Panc1 (cell line): ENCODE measurements at regions of chr5 and their contacts with region 1.

Region 1: GRCh38 chr5:172059661-172060100 is 53.2 kb upstream of the FBXW11 start:
- DNase-seq: no peak
- ATAC-seq: peak; percentile 78
- H3K4me3 ChIP-seq: no peak overlapping the region
- H3K27ac ChIP-seq: no peak overlapping the region
- H3K4me1 ChIP-seq: no peaks in the 10 kb centered on the region
- H3K27me3 ChIP-seq: no peaks in the 10 kb centered on the region
- CTCF ChIP-seq: peak; percentile 89

Region 2: DNA sequence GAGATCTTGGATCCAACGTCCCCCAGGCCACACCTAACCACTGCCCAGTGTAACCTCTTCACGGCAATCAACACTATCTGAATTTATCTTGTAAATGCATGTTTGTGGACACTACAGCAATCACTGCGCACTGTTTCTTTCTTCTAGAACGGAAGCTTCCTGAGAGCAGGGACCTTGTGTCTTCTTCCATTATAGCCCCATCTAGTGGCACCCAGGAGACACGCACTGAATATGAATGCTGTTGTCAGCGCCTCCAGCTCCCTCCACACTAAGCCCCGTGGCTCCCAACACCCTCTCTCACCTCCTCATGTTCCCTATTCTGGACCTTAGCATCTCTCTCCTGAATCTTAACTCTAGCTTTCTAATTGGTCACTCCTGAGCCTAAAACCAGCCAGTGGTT is 201.4 kb before region 1 on chr5:
- CTCF ChIA-PET with region 1: interaction called, 10 read pairs
- POLR2A ChIA-PET with region 1: no interaction called
- in situ Hi-C with region 1: no loop called
- intact Hi-C with region 1: no loop called
- DNase-seq: no peak
- ATAC-seq: peak; percentile 69
- H3K4me3 ChIP-seq: no peak overlapping the region
- H3K27ac ChIP-seq: no peak overlapping the region
- H3K4me1 ChIP-seq: no peaks in the 10 kb centered on the region
- H3K27me3 ChIP-seq: no peaks in the 10 kb centered on the region
- CTCF ChIP-seq: peak; percentile 81

Region 3: DNA sequence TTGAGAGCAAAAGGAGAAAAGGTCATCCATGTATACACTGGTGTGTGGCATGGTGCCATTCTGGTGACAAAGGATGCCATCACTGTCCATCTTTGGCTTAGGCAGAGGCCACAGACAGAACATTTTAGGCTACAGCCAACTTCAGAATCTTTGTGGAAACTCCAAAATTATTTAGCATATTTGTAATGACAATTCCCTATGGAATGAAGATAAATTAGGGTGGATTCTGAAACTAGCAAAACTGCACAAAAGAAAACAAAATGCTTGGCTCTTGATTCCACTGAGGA is 145.8 kb before region 1 on chr5:
- CTCF ChIA-PET with region 1: interaction called, 24 read pairs
- POLR2A ChIA-PET with region 1: no interaction called
- in situ Hi-C with region 1: no loop called
- intact Hi-C with region 1: loop called (anchors 1 kb)
- DNase-seq: no peak
- ATAC-seq: no peak
- H3K4me3 ChIP-seq: no peak overlapping the region
- H3K27ac ChIP-seq: peak overlapping the region; percentile 65
- H3K4me1 ChIP-seq: peaks cover 54% of the 10 kb centered on the region
- H3K27me3 ChIP-seq: no peaks in the 10 kb centered on the region
- CTCF ChIP-seq: no peak

Region 4: DNA sequence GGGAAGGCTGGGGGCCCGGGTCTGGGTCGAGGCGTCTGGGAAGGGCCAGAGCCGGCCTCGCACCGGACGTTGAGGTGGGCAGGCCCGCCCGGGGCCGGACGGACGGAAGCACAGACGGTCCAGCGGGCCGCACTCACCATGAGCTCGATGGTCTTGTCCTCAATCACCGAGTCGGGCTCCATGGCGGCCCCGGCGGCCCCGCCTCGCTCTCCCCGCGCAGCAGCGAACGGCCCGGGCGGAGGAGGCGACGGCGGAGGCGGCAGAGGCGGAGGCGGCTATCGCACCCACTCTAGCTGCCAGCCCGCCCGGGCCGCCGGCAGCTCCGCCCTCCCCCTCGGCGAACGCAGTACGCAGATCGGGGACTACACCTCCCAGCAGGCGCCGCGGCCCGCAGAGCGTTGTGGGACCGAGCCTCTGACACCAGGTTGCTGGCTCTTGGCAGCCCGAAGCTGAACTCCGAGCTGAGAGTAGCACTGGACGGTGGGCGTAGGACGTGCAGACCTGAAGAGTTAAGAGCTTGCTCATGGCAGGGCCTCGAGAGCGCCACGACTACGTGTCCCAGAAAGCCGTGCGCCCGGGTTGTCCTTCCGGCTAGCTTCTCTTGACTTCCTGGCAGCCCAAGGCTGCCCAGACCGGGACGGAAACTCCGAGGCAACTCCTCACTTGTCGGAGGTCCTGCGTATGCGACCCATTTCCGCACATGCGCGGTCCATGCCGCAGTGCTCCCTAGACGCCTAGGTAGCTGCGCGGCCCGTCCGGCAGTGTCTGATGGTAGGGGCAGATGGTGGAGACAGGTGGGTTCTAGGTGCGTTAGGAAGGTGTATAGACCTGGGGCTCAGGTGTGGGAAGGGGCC is 53.1 kb before region 1 on chr5 and contains the start of gene FBXW11:
- CTCF ChIA-PET with region 1: interaction called, 12 read pairs
- POLR2A ChIA-PET with region 1: no interaction called
- in situ Hi-C with region 1: no loop called
- intact Hi-C with region 1: no loop called
- DNase-seq: peak; percentile 86
- ATAC-seq: peak; percentile 93
- H3K4me3 ChIP-seq: peak within 1 kb of the TSS; percentile 99 to 100
- H3K27ac ChIP-seq: peak within 1 kb of the TSS; percentile 99
- H3K4me1 ChIP-seq: peaks cover 52% of the 10 kb centered on the region
- H3K27me3 ChIP-seq: no peaks in the 10 kb centered on the region
- CTCF ChIP-seq: no peak
- total RNA-seq, gene FBXW11: 111 TPM

Region 5: GRCh38 chr5:172101547-172102217 is 42.0 kb after region 1 on chr5:
- CTCF ChIA-PET with region 1: no interaction called
- POLR2A ChIA-PET with region 1: interaction called, 10 read pairs
- in situ Hi-C with region 1: no loop called
- intact Hi-C with region 1: no loop called
- DNase-seq: no peak
- ATAC-seq: no peak
- H3K4me3 ChIP-seq: no peak overlapping the region
- H3K27ac ChIP-seq: no peak overlapping the region
- H3K4me1 ChIP-seq: peaks cover 2% of the 10 kb centered on the region; the same call in 1 of the 2 replicates
- H3K27me3 ChIP-seq: no peaks in the 10 kb centered on the region
- CTCF ChIP-seq: no peak

Region 6: DNA sequence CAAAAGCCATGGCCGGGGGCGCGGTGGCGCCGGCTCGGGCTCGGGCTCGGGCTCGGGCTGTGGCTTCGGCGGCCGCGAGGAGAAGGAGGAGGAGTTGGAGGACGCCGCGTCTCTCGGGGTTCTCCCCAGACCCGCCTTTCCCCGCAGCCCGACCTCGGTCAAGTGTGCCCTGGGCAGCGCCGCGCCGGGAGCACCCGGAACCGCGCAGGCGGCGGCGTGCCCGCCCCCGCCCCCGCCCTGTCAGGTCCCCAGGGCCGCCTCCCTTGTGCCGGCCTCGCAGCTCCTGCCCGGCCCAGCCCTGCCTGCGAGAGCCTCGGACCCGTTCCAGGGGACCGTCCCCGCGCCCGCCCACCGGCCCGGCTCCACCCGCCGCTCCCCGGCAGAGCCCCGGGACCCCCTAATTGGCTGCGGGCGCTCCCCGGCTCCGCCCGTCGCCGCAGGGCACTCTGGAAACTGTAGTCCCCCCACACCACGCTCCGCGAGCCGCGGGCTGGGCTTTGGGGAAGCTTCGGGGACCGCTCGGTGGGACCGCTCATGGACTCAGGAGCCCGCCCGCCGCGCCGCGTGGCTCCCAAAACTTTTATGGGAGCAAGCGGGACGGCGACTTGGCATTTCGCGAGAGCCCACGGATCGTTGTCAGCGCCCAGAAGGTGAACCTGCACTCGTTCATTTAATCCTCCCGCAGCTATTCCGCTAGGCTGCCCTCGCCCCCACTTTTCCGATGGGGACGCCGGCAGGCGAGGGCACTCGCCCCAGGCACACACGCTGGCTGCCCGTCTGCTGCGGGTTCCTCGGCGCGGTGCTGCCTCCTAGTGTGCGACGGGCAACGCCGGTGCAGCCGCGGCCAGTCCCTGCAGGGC is 128.6 kb after region 1 on chr5 and contains the start of gene STK10:
- CTCF ChIA-PET with region 1: interaction called, 19 read pairs
- POLR2A ChIA-PET with region 1: no interaction called
- in situ Hi-C with region 1: no loop called
- intact Hi-C with region 1: no loop called
- DNase-seq: peak; percentile 72
- ATAC-seq: peak; percentile 94
- H3K4me3 ChIP-seq: peak within 1 kb of the TSS; percentile 85 to 94
- H3K27ac ChIP-seq: peak within 1 kb of the TSS; percentile 81
- H3K4me1 ChIP-seq: peaks cover 14% of the 10 kb centered on the region; the same call in 1 of the 2 replicates
- H3K27me3 ChIP-seq: no peaks in the 10 kb centered on the region
- CTCF ChIP-seq: peak; percentile 95
- total RNA-seq, gene STK10: 34.9 TPM